CD4-positive, alpha-beta T cell (primary cell): ENCODE measurements at regions of chr6 and their contacts with region 1.

Region 1: GRCh38 chr6:2857580-2858337 is 16.1 kb upstream of the SERPINB1 start:
- DNase-seq: peak in 12 of 14 experiments; percentile 31 to 92 (median 58)
- ATAC-seq: peak; percentile 15
- H3K4me3 ChIP-seq: no peak overlapping the region
- H3K4me3 Mint-ChIP-seq: peak overlapping the region; percentile 81
- H3K27ac ChIP-seq: peak overlapping the region; percentile 91 to 94
- H3K27ac Mint-ChIP-seq: peak overlapping the region; percentile 94
- H3K4me1 ChIP-seq: peaks cover 95% of the 10 kb centered on the region
- H3K4me1 Mint-ChIP-seq: peaks cover 91% of the 10 kb centered on the region
- H3K27me3 ChIP-seq: no peaks in the 10 kb centered on the region
- H3K27me3 Mint-ChIP-seq: no peaks in the 10 kb centered on the region
- CTCF ChIP-seq: no peak

Region 2: GRCh38 chr6:2482773-2483172 is 375.0 kb before region 1 on chr6:
- CTCF ChIA-PET with region 1: no interaction called
- POLR2A ChIA-PET with region 1: no interaction called
- intact Hi-C with region 1: no loop called
- DNase-seq: no peak
- ATAC-seq: no peak
- H3K4me3 ChIP-seq: no peak overlapping the region
- H3K4me3 Mint-ChIP-seq: no peak overlapping the region
- H3K27ac ChIP-seq: no peak overlapping the region
- H3K27ac Mint-ChIP-seq: no peak overlapping the region
- H3K4me1 ChIP-seq: no peaks in the 10 kb centered on the region
- H3K4me1 Mint-ChIP-seq: no peaks in the 10 kb centered on the region
- H3K27me3 ChIP-seq: peaks cover 0 to 9% of the 10 kb centered on the region in 2 experiments
- H3K27me3 Mint-ChIP-seq: peaks cover 14% of the 10 kb centered on the region
- CTCF ChIP-seq: no peak

Region 3: DNA sequence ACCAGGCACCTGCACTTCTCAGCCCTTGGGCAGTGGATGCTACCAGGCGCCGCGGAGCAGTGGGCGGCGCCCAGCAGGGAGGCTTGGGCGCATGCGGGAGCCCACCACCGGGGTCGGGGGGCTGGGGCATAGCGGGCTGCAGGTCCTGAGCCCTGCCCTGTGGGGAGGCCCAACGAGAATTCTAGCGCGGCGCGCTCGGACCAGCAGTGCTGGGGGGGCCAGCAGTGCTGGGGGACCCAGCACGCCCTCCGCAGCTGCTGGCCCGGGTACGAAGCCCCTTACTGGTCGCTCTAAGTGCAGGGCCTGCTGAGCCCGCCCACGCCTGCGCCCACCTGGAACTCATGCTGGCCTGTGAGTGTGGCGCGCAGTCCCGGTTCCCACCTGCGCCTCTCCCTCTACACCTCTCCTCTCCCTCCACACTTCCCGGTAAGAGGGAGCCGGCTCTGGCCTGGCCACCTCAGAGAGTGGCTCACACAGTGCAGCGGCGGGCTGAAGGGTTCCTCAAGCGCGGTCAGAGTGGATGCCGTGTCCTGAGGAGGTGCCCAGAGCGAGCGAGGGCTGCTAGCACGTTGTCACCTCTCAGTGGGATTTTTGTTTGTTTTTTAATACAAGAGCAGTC is 12.4 kb after region 1 on chr6:
- CTCF ChIA-PET with region 1: no interaction called
- POLR2A ChIA-PET with region 1: interaction called, 35 read pairs
- intact Hi-C with region 1: loop called in 1 of 2 experiments (anchors 1 kb)
- DNase-seq: no peak
- ATAC-seq: no peak
- H3K4me3 ChIP-seq: no peak overlapping the region
- H3K4me3 Mint-ChIP-seq: no peak overlapping the region
- H3K27ac ChIP-seq: no peak overlapping the region
- H3K27ac Mint-ChIP-seq: no peak overlapping the region
- H3K4me1 ChIP-seq: peaks cover 41% of the 10 kb centered on the region
- H3K4me1 Mint-ChIP-seq: peaks cover 60% of the 10 kb centered on the region
- H3K27me3 ChIP-seq: no peaks in the 10 kb centered on the region
- H3K27me3 Mint-ChIP-seq: no peaks in the 10 kb centered on the region
- CTCF ChIP-seq: no peak

Region 4: DNA sequence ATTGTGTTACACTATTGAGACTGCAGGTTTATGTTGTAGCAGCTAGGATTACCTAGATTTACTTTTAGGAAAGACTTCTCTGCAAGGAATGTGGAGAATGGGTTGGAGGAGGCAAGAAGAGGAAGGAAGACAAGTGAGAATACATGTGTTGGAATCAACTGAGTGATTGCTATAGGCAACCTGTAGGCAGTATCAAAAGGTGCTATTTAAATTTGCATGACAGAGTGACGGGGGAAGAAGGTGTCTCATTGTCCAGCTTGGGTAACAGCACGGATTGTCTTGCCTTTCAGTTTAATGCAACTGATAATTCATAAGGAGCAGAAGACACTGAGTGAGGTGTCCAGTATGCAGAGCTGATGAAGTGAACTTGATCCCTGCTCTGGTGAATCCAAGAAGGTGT is 25.9 kb after region 1 on chr6:
- CTCF ChIA-PET with region 1: interaction called, 6 read pairs
- POLR2A ChIA-PET with region 1: interaction called, 20 read pairs
- intact Hi-C with region 1: loop called in 1 of 2 experiments (anchors 1 kb)
- DNase-seq: no peak
- ATAC-seq: no peak
- H3K4me3 ChIP-seq: no peak overlapping the region
- H3K4me3 Mint-ChIP-seq: no peak overlapping the region
- H3K27ac ChIP-seq: no peak overlapping the region
- H3K27ac Mint-ChIP-seq: peak overlapping the region; percentile 76
- H3K4me1 ChIP-seq: peaks cover 13% of the 10 kb centered on the region
- H3K4me1 Mint-ChIP-seq: peaks cover 83% of the 10 kb centered on the region
- H3K27me3 ChIP-seq: no peaks in the 10 kb centered on the region
- H3K27me3 Mint-ChIP-seq: no peaks in the 10 kb centered on the region
- CTCF ChIP-seq: no peak

Region 5: GRCh38 chr6:2900821-2901644 is 43.3 kb after region 1 on chr6:
- CTCF ChIA-PET with region 1: no interaction called
- POLR2A ChIA-PET with region 1: interaction called, 25 read pairs
- intact Hi-C with region 1: loop called in 1 of 2 experiments (anchors 2 kb)
- DNase-seq: peak in 2 of 14 experiments; percentile 6 to 26
- ATAC-seq: no peak
- H3K4me3 ChIP-seq: peak overlapping the region; percentile 95
- H3K4me3 Mint-ChIP-seq: peak overlapping the region; percentile 100
- H3K27ac ChIP-seq: peak overlapping the region; percentile 9 to 69
- H3K27ac Mint-ChIP-seq: peak overlapping the region; percentile 99
- H3K4me1 ChIP-seq: peaks cover 50% of the 10 kb centered on the region
- H3K4me1 Mint-ChIP-seq: peaks cover 63% of the 10 kb centered on the region
- H3K27me3 ChIP-seq: no peaks in the 10 kb centered on the region
- H3K27me3 Mint-ChIP-seq: no peaks in the 10 kb centered on the region
- CTCF ChIP-seq: no peak

Region 6: DNA sequence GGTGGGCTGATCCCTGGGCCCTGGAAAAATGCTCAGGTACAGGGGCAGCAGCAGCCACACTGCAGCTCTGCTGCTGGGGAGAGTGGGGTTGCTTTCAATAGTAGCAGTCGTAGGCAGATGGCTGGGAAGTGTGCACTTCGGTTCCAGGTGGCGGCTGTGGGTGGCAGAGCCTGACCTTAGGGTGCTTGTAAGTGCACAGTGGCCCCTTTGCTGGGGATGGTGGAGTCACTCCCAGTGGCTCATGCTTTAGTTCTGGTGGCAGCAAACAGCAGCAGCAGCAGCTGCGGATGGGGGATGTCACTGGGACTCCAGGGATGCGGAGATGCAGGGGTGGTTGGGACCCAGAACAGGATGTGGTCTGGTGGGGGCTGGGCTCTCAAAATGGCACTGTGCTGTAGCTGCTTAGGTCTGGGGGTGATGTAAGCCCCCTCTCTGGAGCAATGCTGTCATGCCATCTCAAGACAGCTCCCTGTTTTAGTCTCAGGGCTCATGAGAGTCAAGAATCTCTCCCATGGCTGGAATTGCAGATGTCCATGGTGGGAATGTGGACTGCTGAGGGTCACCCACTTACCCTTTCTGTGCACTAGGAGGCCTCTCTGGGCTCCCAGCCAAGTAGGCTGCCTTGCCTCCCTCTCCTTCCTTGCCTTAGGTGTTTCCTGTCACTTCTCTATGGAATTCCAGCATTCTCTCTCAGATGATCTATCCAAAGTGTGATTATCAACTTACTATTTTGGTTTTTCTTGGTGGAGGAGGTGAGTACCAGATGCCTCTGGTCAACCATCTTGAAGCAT is 745.8 kb after region 1 on chr6:
- CTCF ChIA-PET with region 1: no interaction called
- POLR2A ChIA-PET with region 1: no interaction called
- intact Hi-C with region 1: no loop called
- DNase-seq: no peak
- ATAC-seq: no peak
- H3K4me3 ChIP-seq: no peak overlapping the region
- H3K4me3 Mint-ChIP-seq: no peak overlapping the region
- H3K27ac ChIP-seq: no peak overlapping the region
- H3K27ac Mint-ChIP-seq: no peak overlapping the region
- H3K4me1 ChIP-seq: no peaks in the 10 kb centered on the region
- H3K4me1 Mint-ChIP-seq: no peaks in the 10 kb centered on the region
- H3K27me3 ChIP-seq: peaks cover 0 to 14% of the 10 kb centered on the region in 2 experiments
- H3K27me3 Mint-ChIP-seq: peaks cover 44% of the 10 kb centered on the region
- CTCF ChIP-seq: no peak